Endothelial cell of umbilical vein (primary cell): ENCODE measurements at regions of chr6 and their contacts with region 1.

Region 1: GRCh38 chr6:155174576-155175211 is 89.1 kb upstream of the CLDN20 start:
- DNase-seq: peak; percentile 86
- H3K4me3 ChIP-seq: no peak overlapping the region
- H3K27ac ChIP-seq: peak overlapping the region; percentile 7
- H3K4me1 ChIP-seq: peaks cover 32% of the 10 kb centered on the region
- H3K27me3 ChIP-seq: no peaks in the 10 kb centered on the region
- CTCF ChIP-seq: peak; percentile 64 to 73
- POLR2A ChIP-seq: no peak

Region 2: GRCh38 chr6:154733012-154733625 is 441.6 kb before region 1 on chr6 and contains the start of gene SCAF8:
- CTCF ChIA-PET with region 1: no interaction called
- POLR2A ChIA-PET with region 1: no interaction called
- dilution Hi-C with region 1: no loop called
- intact Hi-C with region 1: loop called (anchors 1 kb)
- DNase-seq: peak; percentile 81
- H3K4me3 ChIP-seq: peak within 1 kb of the TSS; percentile 74 to 96 (median 89)
- H3K27ac ChIP-seq: peak within 1 kb of the TSS; percentile 90
- H3K4me1 ChIP-seq: peaks cover 20% of the 10 kb centered on the region
- H3K27me3 ChIP-seq: no peaks in the 10 kb centered on the region
- CTCF ChIP-seq: peak; percentile 83 to 85
- POLR2A ChIP-seq: peak; percentile 84
- total RNA-seq, gene SCAF8: 37.4 and 37.8 TPM in 2 replicates

Region 3: DNA sequence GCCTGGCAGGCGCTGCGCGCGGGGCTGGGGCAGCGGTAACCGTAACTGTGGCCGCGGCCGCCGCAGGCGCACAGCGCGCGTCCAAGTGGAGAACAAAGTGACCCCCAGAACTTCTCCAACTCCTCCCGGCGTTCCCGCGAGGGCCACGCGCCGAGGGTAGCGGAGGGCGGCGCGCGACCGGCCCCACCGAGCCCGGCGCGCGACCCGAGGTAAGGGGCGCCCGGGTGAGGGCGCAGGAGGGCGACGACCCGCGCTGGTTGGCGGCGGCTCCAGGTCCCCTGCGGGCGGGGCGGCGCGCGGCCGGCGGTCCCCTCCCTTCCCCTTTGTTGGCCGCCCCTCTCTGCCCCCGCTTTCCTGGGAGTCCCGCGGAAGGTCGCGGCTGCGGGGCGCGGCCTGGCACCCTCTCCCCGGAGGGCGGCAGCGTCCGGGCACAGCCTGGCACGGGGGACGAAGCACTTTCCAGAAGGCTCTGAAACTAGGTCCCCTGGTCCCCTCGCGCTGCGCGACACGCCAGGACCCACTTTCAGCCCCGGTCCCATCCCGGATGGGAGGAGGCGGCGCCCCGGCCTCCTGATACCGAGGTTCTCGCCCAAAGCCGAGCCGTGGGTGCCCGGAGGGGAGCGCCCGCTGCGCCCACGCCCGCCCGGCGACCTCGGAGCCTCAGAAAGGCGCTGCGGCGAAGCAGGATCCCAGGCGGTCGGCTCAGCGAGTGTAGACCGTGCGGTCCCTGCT is 179.2 kb before region 1 on chr6 and contains the start of gene TIAM2:
- CTCF ChIA-PET with region 1: interaction called, 4 read pairs
- POLR2A ChIA-PET with region 1: no interaction called
- dilution Hi-C with region 1: no loop called
- intact Hi-C with region 1: loop called (anchors 1 kb)
- DNase-seq: no peak
- H3K4me3 ChIP-seq: peak within 1 kb of the TSS; percentile 77 to 96 (median 86)
- H3K27ac ChIP-seq: no peak within 1 kb of the TSS
- H3K4me1 ChIP-seq: peaks cover 6% of the 10 kb centered on the region
- H3K27me3 ChIP-seq: no peaks in the 10 kb centered on the region
- CTCF ChIP-seq: no peak
- POLR2A ChIP-seq: no peak
- total RNA-seq, gene TIAM2: 13.5 and 18.5 TPM in 2 replicates

Region 4: DNA sequence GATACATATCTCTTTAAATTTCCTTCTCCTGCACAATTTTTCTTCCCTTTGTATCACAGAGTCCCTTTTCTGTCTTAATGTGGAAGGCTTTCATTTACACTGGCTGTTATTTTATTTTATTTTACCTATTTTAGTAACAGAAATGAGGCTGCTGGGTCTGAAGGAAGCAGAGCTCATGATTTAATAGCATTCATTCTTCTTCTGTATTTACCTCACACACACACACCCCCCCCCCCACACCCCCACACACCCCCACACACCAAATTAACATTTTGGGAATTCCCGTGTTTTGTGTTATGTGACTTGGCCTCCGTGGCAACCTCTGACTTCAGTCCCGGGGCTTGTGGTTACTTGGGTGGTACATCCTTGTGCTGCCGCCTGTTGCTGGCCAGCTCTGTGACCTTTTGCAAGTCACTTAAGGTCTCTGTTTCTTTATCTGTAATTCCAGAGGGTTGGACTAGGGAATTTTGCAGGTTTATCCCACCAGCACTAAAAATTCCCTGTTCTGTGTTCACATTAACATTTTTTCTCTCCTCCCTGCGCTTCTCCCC is 70.8 kb before region 1 on chr6:
- CTCF ChIA-PET with region 1: interaction called, 3 read pairs
- POLR2A ChIA-PET with region 1: no interaction called
- dilution Hi-C with region 1: no loop called
- intact Hi-C with region 1: loop called (anchors 1 kb)
- DNase-seq: no peak
- H3K4me3 ChIP-seq: no peak overlapping the region
- H3K27ac ChIP-seq: no peak overlapping the region
- H3K4me1 ChIP-seq: peaks cover 19% of the 10 kb centered on the region
- H3K27me3 ChIP-seq: no peaks in the 10 kb centered on the region
- CTCF ChIP-seq: no peak
- POLR2A ChIP-seq: no peak

Region 5: DNA sequence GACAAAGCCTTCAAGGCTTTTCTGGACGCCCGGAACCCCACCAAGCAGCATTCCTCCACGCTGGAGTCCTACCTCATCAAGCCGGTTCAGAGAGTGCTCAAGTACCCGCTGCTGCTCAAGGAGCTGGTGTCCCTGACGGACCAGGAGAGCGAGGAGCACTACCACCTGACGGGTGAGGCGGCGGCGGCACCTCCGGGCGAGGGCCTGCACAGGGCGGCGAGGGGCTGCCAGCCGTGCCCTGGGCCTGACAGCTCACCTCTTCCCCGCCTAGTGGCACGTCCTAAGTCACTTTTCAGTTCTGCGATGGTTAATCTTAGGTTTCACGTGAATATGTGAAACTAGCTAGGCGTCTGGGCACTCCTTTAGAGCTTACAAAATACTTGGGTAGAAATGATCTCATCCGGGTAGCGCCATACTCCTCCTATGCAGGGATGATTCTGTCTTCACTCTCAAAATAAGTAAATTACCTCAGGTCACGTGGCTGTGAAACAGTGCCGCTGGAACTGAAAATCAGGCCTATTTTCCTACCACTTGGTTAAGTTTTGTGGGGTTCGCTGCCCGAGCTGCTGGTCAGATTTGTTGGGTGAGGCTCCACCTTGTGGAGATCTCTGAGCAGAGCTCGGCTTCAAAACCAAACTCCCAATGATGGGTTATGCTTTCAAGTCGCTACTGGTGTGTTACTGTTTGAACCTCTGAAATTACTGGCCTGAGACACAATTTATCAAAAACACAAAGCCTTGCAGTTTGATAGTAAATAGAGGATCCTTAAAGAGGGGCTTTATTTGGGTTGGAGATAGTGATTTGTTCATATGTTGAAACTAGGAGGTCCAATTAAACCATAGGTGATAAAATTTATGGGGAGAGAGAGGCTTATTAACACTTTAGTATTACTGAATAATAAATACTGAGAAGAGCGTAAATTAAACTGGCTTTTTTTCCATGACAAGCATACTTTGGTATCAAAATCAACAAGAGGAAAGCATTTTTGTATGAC is 73.6 kb after region 1 on chr6:
- CTCF ChIA-PET with region 1: interaction called, 292 read pairs
- POLR2A ChIA-PET with region 1: no interaction called
- dilution Hi-C with region 1: no loop called
- intact Hi-C with region 1: loop called (anchors 1 kb)
- DNase-seq: peak; percentile 75
- H3K4me3 ChIP-seq: no peak overlapping the region
- H3K27ac ChIP-seq: no peak overlapping the region
- H3K4me1 ChIP-seq: no peaks in the 10 kb centered on the region
- H3K27me3 ChIP-seq: no peaks in the 10 kb centered on the region
- CTCF ChIP-seq: peak; percentile 71 to 74
- POLR2A ChIP-seq: no peak

Region 6: DNA sequence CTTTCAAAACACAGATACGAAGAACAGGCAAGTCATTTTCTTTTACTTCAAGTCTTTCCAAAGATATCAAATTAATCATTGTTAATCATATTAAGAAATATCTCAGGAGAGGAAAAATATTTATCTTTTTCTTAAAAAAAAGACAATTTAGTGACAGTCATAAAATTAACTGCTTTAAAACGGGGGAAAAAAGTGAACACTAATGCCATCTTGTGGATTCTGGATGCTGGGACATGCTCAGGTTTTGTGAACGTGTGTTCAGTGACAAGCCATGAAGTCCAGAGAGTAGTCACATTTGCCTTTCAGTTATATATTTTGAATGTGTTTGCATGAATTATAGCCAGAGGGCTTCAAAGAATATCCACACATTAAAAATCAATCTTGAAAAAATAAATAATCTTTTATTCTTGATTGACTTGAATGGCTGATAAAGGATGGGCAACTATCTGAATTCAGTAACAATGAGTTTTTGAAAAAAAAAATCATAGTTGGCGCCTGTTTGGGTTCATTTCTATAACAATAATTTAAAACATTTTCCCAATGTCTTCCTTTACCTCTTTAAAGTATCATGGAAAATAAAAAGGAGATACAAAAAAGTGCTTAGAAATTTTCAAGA is 355.6 kb after region 1 on chr6:
- CTCF ChIA-PET with region 1: no interaction called
- POLR2A ChIA-PET with region 1: no interaction called
- dilution Hi-C with region 1: no loop called
- intact Hi-C with region 1: loop called (anchors 5 kb)
- DNase-seq: peak; percentile 77
- H3K4me3 ChIP-seq: no peak overlapping the region
- H3K27ac ChIP-seq: peak overlapping the region; percentile 83
- H3K4me1 ChIP-seq: peaks cover 16% of the 10 kb centered on the region
- H3K27me3 ChIP-seq: no peaks in the 10 kb centered on the region
- CTCF ChIP-seq: peak; percentile 55 to 60
- POLR2A ChIP-seq: no peak